ENCODE measurements at regions of chr6 and their contacts with region 1.

Region 1: GRCh38 chr6:159862103-159862502 is 28.7 kb upstream of the MAS1 start:
- DNase-seq: no peak
- H3K4me3 Mint-ChIP-seq: no peak overlapping the region
- H3K27ac Mint-ChIP-seq: no peak overlapping the region
- H3K4me1 Mint-ChIP-seq: peaks cover 13% of the 10 kb centered on the region
- H3K27me3 Mint-ChIP-seq: peaks cover 13% of the 10 kb centered on the region

Region 2: DNA sequence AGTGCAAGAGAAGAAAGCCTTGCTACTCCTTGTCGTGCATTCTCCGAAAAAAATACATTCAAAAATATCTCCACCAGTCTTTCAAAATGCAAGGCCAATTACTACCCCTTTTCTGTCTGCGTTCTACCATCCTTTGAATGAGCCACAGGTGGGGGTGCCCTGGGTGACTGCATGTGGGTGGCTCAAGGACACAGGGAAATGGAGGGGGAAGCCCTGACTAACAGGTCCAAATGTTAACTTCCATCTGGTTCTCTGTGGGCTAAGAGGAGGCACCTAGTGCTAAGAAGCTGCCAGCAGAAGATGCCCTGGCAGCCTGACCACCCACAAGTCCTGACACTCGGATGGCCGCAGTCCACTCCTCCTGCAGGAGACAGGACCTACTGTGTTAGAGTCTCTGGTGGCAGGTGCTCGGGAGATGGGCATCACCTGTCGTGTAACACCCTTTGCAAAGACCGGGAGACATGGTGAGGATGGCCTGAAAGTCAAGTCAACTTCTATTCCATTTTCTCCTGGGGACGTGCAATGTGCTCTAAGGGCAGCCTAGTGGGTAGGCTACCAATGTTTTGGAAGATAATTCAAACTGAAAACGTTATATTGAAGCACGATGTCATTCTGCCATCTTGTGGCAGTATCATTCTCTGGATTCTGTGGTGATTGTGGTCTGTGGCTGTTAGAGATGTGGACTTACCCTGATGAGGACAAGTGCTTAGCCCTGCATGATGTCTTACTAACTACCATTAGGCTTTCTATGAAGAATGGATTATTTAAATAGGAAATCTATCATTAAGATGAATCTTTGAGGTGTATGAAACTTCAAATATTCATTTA is 79.4 kb after region 1 on chr6:
- intact Hi-C with region 1: loop called (anchors 1 kb)
- DNase-seq: peak; percentile 26
- H3K4me3 Mint-ChIP-seq: no peak overlapping the region
- H3K27ac Mint-ChIP-seq: no peak overlapping the region
- H3K4me1 Mint-ChIP-seq: peaks cover 10% of the 10 kb centered on the region
- H3K27me3 Mint-ChIP-seq: peaks cover 23% of the 10 kb centered on the region

Region 3: DNA sequence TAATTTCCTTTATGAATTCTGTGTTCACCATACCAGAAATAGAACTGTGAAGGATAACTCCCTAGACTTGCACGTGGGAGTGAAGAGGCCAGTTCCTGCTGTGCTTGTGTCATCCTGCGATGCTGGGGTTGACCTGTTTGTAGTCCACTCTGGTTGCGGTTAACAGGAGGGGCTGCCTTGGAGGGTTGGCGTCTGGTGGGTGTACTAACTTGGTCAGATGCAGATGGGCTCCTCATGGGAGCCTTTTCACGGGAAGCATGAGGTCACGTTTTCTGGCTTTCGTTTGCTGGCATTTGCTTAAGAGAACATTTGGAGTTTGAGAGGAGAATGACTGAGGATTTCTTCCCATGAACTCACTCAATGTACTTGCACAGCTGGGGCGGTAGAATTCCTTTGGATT is 148.0 kb after region 1 on chr6:
- intact Hi-C with region 1: loop called (anchors 10 kb)
- DNase-seq: no peak
- H3K4me3 Mint-ChIP-seq: no peak overlapping the region
- H3K27ac Mint-ChIP-seq: no peak overlapping the region
- H3K4me1 Mint-ChIP-seq: peaks cover 62% of the 10 kb centered on the region
- H3K27me3 Mint-ChIP-seq: no peaks in the 10 kb centered on the region

Region 4: GRCh38 chr6:160092602-160093001 is 230.5 kb after region 1 on chr6:
- intact Hi-C with region 1: no loop called
- DNase-seq: no peak
- H3K4me3 Mint-ChIP-seq: no peak overlapping the region
- H3K27ac Mint-ChIP-seq: no peak overlapping the region
- H3K4me1 Mint-ChIP-seq: no peaks in the 10 kb centered on the region
- H3K27me3 Mint-ChIP-seq: no peaks in the 10 kb centered on the region

Region 5: DNA sequence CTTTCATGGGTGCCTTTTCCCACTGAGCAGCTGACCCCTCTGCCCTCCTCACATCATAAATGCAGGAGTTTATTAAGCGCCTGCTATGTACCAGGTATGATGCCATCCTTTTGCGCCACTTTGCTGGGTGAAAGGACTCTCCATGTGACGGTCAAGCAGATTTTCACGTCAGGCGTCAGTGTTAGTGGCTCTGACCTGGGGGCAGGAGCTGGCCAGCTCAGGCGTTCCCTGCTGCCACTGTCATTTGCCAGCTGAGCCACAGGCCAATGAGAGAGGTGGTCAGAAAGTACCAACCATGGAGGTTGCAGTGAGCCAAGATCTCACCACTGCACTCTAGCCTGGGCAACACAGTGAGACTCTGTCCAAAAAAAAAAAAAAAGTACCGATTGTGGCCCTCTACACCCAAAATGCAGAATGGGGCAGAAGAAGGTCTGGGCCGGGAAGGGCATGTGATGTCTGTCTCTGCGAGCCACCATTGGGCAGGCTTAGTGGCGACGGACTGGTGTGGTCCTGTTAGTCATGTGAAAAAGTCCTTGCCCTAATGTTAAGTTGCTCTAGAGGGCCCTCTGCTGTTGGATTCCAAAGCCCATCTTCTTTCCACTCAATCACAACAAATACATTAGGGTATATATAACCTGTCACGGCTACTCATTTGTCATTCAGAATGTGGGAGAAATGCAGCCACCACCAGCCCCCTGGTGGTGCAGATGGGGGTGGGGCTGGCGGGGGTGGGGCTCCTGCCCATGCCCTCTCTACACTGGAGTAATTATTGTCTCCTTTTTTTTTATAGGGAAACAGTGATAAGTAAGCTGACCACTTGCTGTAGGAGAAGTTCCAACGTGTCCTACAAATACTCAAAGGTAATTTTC is 241.1 kb after region 1 on chr6:
- intact Hi-C with region 1: loop called (anchors 5 kb)
- DNase-seq: no peak
- H3K4me3 Mint-ChIP-seq: no peak overlapping the region
- H3K27ac Mint-ChIP-seq: no peak overlapping the region
- H3K4me1 Mint-ChIP-seq: peaks cover 28% of the 10 kb centered on the region
- H3K27me3 Mint-ChIP-seq: no peaks in the 10 kb centered on the region

Region 6: GRCh38 chr6:160455541-160456213 is 593.6 kb after region 1 on chr6:
- intact Hi-C with region 1: loop called (anchors 1 kb)
- DNase-seq: peak; percentile 53
- H3K4me3 Mint-ChIP-seq: no peak overlapping the region
- H3K27ac Mint-ChIP-seq: no peak overlapping the region
- H3K4me1 Mint-ChIP-seq: peaks cover 33% of the 10 kb centered on the region
- H3K27me3 Mint-ChIP-seq: peaks cover 24% of the 10 kb centered on the region

Region 7: DNA sequence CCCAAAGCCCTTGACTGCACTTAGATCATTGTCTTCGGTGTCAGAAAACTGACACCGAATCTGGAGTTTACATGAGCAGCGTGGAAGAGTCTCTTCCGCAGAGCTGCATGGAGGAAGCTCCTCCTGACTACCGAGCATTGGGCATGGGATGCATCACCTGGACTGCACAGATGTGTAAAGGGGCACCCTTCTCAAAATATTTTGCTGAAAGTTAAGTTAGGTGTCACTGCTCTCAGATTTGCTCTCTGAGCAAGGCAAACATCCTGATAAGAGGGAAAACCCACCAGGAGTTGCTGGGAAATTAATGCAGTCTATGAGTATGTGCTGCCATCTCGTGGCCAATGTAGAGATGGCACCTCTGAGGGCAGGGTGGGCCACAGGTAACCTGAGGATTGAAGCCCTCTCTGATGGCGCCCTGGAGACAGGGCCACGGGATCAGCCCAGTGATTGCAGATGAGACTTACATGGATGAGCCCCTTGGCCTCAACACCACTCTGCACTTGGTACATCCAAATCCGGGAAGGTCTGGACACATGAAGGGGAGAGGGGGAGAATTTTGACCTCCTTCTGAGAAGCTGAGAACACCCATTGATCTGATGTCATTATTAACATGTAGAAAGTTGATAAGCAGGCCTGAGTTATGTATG is 672.1 kb after region 1 on chr6:
- intact Hi-C with region 1: loop called (anchors 1 kb)
- DNase-seq: peak; percentile 19
- H3K4me3 Mint-ChIP-seq: no peak overlapping the region
- H3K27ac Mint-ChIP-seq: no peak overlapping the region
- H3K4me1 Mint-ChIP-seq: no peaks in the 10 kb centered on the region
- H3K27me3 Mint-ChIP-seq: peaks cover 18% of the 10 kb centered on the region

Measured in activated T-helper 1 cell treated with anti-CD3 and anti-CD28 coated beads, Interleukin-12 subunit alpha, Interleukin-12 subunit beta, Interleukin-2, Interleukin-4 antibody, amounts not matched to agents 30 ng/mL and 10 ng/mL and 1 ng/mL, durations not matched to agents 14 hours and 24 hours and 36 hours (primary cell).